H1 (cell line): ENCODE measurements at regions of chrX and their contacts with region 1.

Region 1: DNA sequence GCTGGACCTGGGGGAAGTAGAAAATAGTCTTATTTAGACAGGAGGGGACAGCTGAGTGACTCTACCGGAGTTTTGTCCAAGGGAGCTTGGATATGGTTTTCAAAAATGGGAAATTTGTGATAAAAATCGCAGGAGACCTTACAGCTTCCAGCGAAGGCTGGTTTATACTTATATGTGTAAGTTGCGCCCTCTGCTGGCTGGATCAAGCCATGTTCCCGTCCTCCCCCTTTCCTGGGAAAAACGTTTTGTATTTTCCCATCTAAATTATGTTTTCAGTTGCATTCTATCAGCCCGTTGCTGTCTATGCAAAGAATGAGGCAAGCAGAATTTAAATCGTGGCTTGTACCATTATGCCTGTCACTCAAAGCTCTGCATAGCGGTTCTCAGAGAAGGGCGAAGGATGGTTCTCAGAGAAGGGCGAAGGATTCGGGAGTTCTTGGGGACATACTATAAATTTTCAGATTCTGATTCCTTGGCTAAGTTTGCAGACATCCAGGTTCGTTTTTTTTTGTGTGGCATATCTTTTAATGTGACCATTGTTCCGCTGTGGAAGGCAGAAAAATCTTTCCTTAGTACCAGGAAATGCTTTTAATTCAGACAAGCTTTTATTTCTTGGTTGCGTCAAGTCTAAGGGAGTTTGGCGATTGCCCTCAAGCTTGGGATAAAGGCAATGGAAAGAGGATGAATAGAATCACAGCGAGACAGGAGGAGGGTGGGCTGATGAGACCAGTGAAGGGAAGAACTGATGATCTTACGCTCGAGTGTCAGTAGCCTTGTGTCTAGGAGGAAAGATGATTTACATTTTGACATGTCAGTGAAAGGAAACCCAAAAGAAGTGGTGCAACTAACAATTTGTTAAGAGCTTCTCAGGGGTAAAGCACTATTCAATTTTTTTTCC is 128.5 kb upstream of the ARX start:
- DNase-seq: peak in 1 of 2 experiments; percentile 60
- H3K4me3 ChIP-seq: no peak overlapping the region; a peak in 1 of 8 replicates
- H3K27ac ChIP-seq: no peak overlapping the region
- H3K4me1 ChIP-seq: no peaks in the 10 kb centered on the region; a peak in 1 of 7 replicates
- H3K27me3 ChIP-seq: no peaks in the 10 kb centered on the region
- CTCF ChIP-seq: peak; percentile 47 to 59 (median 51)
- EP300 ChIP-seq: no peak
- POLR2A ChIP-seq: no peak
- RAD21 ChIP-seq: peak; percentile 74

Region 2: DNA sequence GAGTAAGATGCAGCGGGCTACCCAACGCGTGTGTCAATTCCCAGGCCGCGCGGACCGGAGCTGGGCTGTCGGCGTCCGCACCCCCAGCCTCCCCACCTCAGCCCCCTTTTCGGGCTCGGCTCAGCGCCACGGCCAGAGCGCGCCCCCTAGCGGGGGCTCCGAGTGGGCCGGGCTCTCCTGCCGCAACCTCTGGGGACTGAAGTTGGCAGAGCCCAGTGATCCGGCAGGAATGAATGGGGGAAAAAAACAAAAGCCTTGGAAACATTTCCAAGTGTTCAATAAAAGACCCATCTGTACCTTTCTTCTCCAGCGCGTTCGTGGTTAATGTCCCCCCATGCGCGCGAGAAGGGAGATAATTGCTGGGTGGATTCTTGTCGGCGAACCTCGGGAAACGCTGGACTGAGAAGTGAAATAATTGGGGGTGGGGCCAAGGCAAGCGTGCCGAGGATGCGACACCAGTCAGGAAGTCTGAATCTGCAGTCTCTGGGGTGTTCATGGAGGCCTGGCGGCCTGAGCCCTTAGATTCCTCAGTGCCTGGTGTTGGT is 123.3 kb before region 1 on chrX:
- CTCF ChIA-PET with region 1: interaction called, 11 read pairs
- POLR2A ChIA-PET with region 1: no interaction called
- DNase-seq: peak in 1 of 2 experiments; percentile 80
- H3K4me3 ChIP-seq: peak overlapping the region; percentile 24 to 55 (median 30); a peak in 7 of 8 replicates
- H3K27ac ChIP-seq: no peak overlapping the region
- H3K4me1 ChIP-seq: peaks cover 0 to 12% (median 6%) of the 10 kb centered on the region in 4 experiments; a peak in 6 of 7 replicates
- H3K27me3 ChIP-seq: peaks cover 41 to 75% (median 68%) of the 10 kb centered on the region in 4 experiments
- CTCF ChIP-seq: peak in 2 of 3 experiments; percentile 59 to 69; a peak in 3 of 4 replicates
- EP300 ChIP-seq: no peak
- POLR2A ChIP-seq: no peak
- RAD21 ChIP-seq: peak; percentile 62 to 69

Region 3: DNA sequence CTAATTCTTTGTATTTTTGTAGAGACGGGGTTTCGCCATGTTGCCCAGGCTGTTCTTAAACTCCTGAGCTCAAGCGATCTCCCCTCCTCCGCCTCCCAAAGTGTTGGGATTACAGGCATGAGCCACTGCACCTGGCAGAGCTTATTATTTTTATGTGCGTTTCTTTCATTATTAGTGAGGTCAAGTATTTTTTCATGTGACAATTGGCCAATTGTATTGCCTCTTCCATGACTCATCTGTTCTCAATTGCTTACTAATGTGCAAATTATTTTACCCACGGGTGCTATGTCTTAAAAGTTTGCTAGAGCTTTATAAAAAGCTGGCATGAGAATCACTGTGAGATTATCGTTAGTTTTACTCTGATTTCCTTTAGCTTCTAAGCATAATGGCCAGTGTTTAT is 115.6 kb before region 1 on chrX:
- CTCF ChIA-PET with region 1: interaction called, 60 read pairs
- POLR2A ChIA-PET with region 1: no interaction called
- DNase-seq: no peak
- H3K4me3 ChIP-seq: no peak overlapping the region
- H3K27ac ChIP-seq: no peak overlapping the region
- H3K4me1 ChIP-seq: no peaks in the 10 kb centered on the region
- H3K27me3 ChIP-seq: no peaks in the 10 kb centered on the region; a peak in 3 of 7 replicates
- CTCF ChIP-seq: no peak
- EP300 ChIP-seq: no peak
- POLR2A ChIP-seq: no peak
- RAD21 ChIP-seq: no peak

Region 4: GRCh38 chrX:25034889-25035288 is 109.4 kb before region 1 on chrX:
- CTCF ChIA-PET with region 1: interaction called, 60 read pairs
- POLR2A ChIA-PET with region 1: no interaction called
- DNase-seq: no peak
- H3K4me3 ChIP-seq: no peak overlapping the region
- H3K27ac ChIP-seq: no peak overlapping the region
- H3K4me1 ChIP-seq: no peaks in the 10 kb centered on the region
- H3K27me3 ChIP-seq: no peaks in the 10 kb centered on the region
- CTCF ChIP-seq: peak; percentile 7 to 59 (median 55)
- EP300 ChIP-seq: no peak
- POLR2A ChIP-seq: no peak
- RAD21 ChIP-seq: peak; percentile 73 to 82

Region 5: GRCh38 chrX:25049357-25049756 is 94.9 kb before region 1 on chrX:
- CTCF ChIA-PET with region 1: interaction called, 12 read pairs
- POLR2A ChIA-PET with region 1: no interaction called
- DNase-seq: no peak
- H3K4me3 ChIP-seq: no peak overlapping the region; a peak in 1 of 8 replicates
- H3K27ac ChIP-seq: no peak overlapping the region; the same call in 1 of the 2 replicates
- H3K4me1 ChIP-seq: peaks cover 0 to 19% (median 4%) of the 10 kb centered on the region in 4 experiments; a peak in 2 of 7 replicates
- H3K27me3 ChIP-seq: no peaks in the 10 kb centered on the region
- CTCF ChIP-seq: no peak
- EP300 ChIP-seq: no peak
- POLR2A ChIP-seq: no peak
- RAD21 ChIP-seq: no peak

Region 6: GRCh38 chrX:25079020-25079419 is 65.3 kb before region 1 on chrX:
- CTCF ChIA-PET with region 1: interaction called, 15 read pairs
- POLR2A ChIA-PET with region 1: no interaction called
- DNase-seq: no peak
- H3K4me3 ChIP-seq: no peak overlapping the region
- H3K27ac ChIP-seq: no peak overlapping the region
- H3K4me1 ChIP-seq: no peaks in the 10 kb centered on the region
- H3K27me3 ChIP-seq: no peaks in the 10 kb centered on the region
- CTCF ChIP-seq: no peak
- EP300 ChIP-seq: no peak
- POLR2A ChIP-seq: no peak
- RAD21 ChIP-seq: no peak; a peak in 1 of 4 replicates

Region 7: GRCh38 chrX:25219480-25219879 is 75.2 kb after region 1 on chrX:
- CTCF ChIA-PET with region 1: no interaction called
- POLR2A ChIA-PET with region 1: no interaction called
- DNase-seq: no peak
- H3K4me3 ChIP-seq: no peak overlapping the region
- H3K27ac ChIP-seq: no peak overlapping the region
- H3K4me1 ChIP-seq: no peaks in the 10 kb centered on the region
- H3K27me3 ChIP-seq: no peaks in the 10 kb centered on the region
- CTCF ChIP-seq: no peak
- EP300 ChIP-seq: no peak
- POLR2A ChIP-seq: no peak
- RAD21 ChIP-seq: no peak